Lower leg skin (tissue), 4 donors: ENCODE measurements at regions of chr1 and their contacts with region 1.

Region 1: DNA sequence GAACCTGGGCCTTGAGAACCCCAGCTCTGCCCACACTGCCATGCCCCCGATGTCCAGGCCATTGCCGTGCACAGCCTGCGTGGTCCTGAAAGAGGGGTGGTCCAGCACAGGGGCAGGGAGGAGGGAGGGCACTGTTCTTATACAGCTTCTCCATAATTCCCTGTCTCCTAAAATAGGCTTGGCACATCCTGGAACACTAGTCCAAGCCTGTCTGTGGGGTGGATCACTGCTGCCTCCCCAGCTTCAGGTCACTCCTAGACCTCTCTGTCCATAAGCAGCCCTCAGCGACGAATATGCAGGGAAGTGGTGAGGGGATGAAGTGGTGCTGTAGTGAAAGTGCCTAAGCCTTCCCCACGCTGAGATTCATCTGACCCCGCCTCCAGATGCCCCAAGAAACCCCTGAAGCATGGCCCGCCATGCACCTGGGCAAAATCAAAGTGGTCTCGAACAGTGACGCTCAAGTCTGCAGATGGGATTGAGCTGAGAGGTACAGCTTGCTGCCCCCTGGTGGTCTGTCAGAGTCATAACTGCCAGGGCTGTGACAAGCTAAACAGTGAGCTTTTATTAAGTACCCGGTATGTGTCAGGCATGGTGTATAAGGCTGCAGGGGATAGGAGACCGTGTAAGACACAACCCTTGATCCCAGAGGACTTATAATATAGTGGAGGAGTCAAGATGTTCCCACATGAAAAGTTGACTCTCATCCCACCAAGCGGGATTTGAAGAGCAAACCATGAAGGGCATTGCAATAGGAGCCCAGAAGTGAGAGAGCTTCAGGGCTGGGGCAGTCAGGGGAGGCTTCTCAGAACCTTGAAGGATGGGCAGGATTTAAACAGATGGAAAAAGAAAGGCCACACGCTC is 66.6 kb downstream of the FAM163A start:
- DNase-seq: peak in 1 of 2 donors; percentile 27
- H3K4me3 ChIP-seq: no peak overlapping the region
- CTCF ChIP-seq: no peak
- POLR2A ChIP-seq: no peak

Region 2: GRCh38 chr1:179702946-179703539 is 106.7 kb before region 1 on chr1:
- intact Hi-C with region 1: loop called (anchors 5 kb)
- DNase-seq: no peak
- H3K4me3 ChIP-seq: no peak overlapping the region
- CTCF ChIP-seq: no peak
- POLR2A ChIP-seq: no peak

Region 3: DNA sequence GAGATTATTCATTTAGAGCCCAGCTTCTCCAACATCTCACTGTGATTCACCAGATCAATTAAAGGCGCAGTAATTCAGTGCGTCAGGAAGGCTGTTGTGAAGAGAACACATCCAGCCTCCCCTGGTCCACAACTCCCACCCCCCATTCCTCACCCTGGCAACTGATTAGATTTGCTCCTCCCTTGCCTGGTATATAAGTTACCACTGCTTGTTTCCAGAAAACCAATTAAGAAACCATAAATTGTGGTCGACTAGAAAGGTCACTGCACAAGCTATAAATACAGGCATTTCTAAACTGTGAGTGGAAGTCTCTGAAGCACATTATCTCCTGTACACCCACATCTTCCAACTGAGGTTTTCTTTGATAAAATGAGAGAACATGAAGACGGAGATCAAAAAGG is 24.7 kb before region 1 on chr1:
- intact Hi-C with region 1: no loop called
- DNase-seq: peak in 1 of 2 donors; percentile 10
- H3K4me3 ChIP-seq: no peak overlapping the region
- CTCF ChIP-seq: no peak
- POLR2A ChIP-seq: no peak

Region 4: GRCh38 chr1:179853102-179853501 is 43.4 kb after region 1 on chr1:
- intact Hi-C with region 1: no loop called
- DNase-seq: no peak
- H3K4me3 ChIP-seq: no peak overlapping the region
- CTCF ChIP-seq: no peak
- POLR2A ChIP-seq: no peak

Region 5: GRCh38 chr1:179973198-179974110 is 163.7 kb after region 1 on chr1:
- intact Hi-C with region 1: no loop called
- DNase-seq: no peak
- H3K4me3 ChIP-seq: no peak overlapping the region
- CTCF ChIP-seq: no peak
- POLR2A ChIP-seq: no peak

Region 6: DNA sequence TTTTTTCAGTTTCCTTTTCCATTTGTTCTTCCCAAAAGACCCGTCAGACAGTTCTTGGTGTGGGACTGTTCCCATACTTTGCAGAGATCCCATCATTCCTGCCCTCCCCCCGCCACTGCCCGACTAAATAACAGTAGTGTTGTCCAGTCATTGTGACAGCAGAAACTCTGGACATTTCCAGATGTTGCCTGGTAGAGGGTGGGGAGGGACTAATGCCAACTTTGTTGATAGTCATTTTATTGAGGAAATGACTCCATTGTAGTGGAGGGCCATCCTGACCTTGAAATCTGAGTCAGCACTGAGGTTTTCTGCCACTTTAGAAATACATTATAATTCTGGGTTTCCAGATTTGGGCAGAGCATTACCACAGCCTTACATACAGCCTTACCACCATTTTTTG is 230.3 kb after region 1 on chr1:
- intact Hi-C with region 1: no loop called
- DNase-seq: no peak
- H3K4me3 ChIP-seq: no peak overlapping the region
- CTCF ChIP-seq: no peak
- POLR2A ChIP-seq: no peak